ENCODE measurements at regions of chr15 and their contacts with region 1.

Region 1: DNA sequence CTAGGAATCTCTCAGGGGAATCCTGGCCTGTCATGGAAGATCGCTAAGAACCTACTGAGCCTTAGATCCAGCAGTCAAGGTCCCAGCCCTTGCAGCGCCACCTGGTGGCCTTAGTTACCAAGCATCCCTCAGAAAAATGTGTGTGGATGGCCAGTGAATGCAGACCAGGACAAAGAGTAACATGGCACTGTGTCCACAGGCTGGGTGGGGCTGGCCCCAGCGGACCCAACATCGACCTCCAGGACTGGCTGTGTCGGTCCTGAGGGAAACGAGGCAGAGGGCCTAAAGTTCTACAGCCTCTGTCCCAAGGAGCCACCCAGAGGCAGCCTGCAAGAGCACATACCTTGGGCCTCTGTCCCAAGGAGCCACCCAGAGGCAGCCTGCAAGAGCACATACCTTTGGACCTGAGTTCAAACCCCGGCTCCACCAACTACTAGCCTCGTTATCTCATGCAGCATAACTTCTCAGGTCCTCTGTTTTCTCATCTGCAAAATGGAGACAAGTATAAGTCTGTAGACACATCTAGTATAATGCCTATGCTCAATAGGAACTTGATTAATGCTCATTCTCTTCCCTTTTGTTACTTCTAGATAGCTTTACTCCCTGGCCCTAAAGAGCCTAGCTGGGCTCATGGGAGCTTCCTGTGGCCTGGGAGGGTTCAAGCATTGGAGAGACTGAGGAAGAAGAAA is 57.5 kb upstream of the HERC1 start:
- DNase-seq: peak; percentile 85
- H3K4me3 Mint-ChIP-seq: no peak overlapping the region
- H3K27ac Mint-ChIP-seq: no peak overlapping the region
- H3K4me1 Mint-ChIP-seq: peaks cover 40% of the 10 kb centered on the region
- H3K27me3 Mint-ChIP-seq: no peaks in the 10 kb centered on the region

Region 2: GRCh38 chr15:64067564-64068030 is 176.4 kb after region 1 on chr15:
- CTCF ChIA-PET with region 1: interaction called, 26 read pairs
- POLR2A ChIA-PET with region 1: interaction called, 3 read pairs
- intact Hi-C with region 1: loop called (anchors 5 kb)
- DNase-seq: peak; percentile 73
- H3K4me3 Mint-ChIP-seq: no peak overlapping the region
- H3K27ac Mint-ChIP-seq: peak overlapping the region; percentile 38
- H3K4me1 Mint-ChIP-seq: peaks cover 4% of the 10 kb centered on the region
- H3K27me3 Mint-ChIP-seq: no peaks in the 10 kb centered on the region